Right cardiac atrium (tissue), 5 donors: ENCODE measurements at regions of chr14 and their contacts with region 1.

Region 1: GRCh38 chr14:100645192-100645990 is 58.2 kb upstream of the BEGAIN start:
- DNase-seq: peak; percentile 87 to 94 (median 90)
- ATAC-seq: peak; percentile 89 to 91
- H3K4me3 ChIP-seq: no peak overlapping the region
- H3K27ac ChIP-seq: no peak overlapping the region
- H3K4me1 ChIP-seq: no peaks in the 10 kb centered on the region
- H3K27me3 ChIP-seq: no peaks in the 10 kb centered on the region

Region 2: DNA sequence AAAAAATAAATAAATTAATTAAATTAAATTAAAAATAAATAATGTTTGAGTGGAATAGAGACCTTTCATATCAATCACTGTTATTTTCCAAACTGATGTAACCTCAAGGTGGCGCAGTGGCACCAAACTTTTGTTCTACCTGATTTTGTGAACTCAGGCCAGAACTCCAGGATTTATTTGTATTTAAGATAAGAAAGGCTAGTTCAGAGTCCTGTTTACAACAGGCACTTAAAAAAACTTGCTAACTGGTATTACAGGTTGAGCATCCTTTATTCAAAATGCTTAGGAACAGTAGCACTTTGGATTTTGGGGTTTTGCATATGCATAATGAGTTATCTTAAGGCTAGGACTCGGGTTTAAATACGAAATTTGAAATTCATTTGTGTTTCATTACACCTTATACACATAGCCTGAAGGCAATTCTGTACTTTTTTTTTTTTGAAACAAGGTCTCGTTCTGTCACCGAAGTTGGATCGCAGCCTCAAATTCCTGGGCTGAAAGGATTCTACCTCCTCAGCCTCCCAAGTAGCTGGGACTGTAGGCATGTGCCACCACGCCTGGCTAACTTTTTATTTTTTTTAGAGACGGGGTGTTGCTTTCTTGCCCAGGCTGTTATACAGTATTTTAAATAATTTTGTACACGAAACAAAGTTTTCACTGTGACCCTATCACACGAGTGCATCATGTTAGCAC is 374.0 kb before region 1 on chr14:
- intact Hi-C with region 1: loop called in 1 of 4 experiments (anchors 10 kb)
- DNase-seq: peak in 1 of 3 donors; percentile 38
- ATAC-seq: peak; percentile 17 to 22
- H3K4me3 ChIP-seq: no peak overlapping the region
- H3K27ac ChIP-seq: no peak overlapping the region
- H3K4me1 ChIP-seq: peaks cover 1% of the 10 kb centered on the region
- H3K27me3 ChIP-seq: no peaks in the 10 kb centered on the region

Region 3: DNA sequence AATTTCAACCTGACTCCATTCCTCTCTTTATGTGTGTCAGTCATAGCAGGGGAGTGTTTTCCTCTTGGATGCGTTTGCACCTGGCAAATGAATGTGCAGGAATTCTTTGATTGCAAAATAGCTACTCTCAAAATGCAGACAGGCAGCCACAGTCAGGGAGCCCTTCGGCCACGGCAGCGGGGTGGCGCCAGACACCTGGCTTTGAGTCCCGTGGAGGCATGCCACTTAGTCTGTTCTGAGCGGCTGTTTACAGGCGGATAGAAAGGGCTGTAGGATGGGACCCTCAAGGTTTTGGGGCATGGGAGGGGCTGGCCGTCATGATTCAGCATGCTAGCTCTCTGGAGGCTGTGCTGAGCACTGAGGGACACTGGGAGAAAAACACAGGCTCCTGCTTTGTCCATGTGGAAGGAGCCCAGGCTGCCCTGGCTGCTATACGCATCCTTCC is 205.2 kb before region 1 on chr14:
- intact Hi-C with region 1: loop called in 1 of 4 experiments (anchors 2 kb)
- DNase-seq: peak; percentile 62 to 87 (median 85)
- ATAC-seq: peak; percentile 82 to 86
- H3K4me3 ChIP-seq: no peak overlapping the region
- H3K27ac ChIP-seq: peak overlapping the region; percentile 71
- H3K4me1 ChIP-seq: peaks cover 2% of the 10 kb centered on the region
- H3K27me3 ChIP-seq: no peaks in the 10 kb centered on the region